Heart right ventricle (tissue), 16 donors: ENCODE measurements at regions of chrX and their contacts with region 1.

Region 1: GRCh38 chrX:38166478-38167083 is 54.1 kb downstream of the SRPX start:
- DNase-seq: no peak
- ATAC-seq: no peak
- H3K4me3 ChIP-seq: no peak overlapping the region
- H3K27ac ChIP-seq: no peak overlapping the region
- H3K4me1 ChIP-seq: no peaks in the 10 kb centered on the region
- H3K27me3 ChIP-seq: peaks cover 0 to 12% (median 0%) of the 10 kb centered on the region in 7 donors
- CTCF ChIP-seq: peak; percentile 22 to 64 (median 56)

Region 2: DNA sequence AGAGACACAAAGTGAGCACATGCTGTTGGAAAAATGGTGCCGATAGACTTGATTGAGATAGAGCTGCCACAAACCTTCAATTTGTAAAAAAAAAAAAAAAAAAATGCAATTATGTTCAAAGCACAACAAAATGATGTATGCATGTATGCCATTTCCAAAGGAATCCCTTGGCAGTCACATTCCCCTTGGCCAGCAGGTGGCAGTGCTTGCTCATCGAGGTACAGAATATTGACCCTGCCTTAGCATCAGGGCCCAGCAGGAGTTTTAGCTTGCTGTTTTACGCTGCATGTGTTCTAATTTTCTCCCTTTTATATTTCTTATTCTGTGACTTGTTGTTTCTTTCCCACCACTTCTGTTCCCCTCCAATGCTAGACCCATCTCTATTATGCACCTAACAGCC is 421.2 kb before region 1 on chrX:
- intact Hi-C with region 1: loop called in 3 of 10 experiments (anchors 5 to 10 kb)
- DNase-seq: peak; percentile 53 to 59
- ATAC-seq: peak in 7 of 8 donors; percentile 38 to 78 (median 57)
- H3K4me3 ChIP-seq: no peak overlapping the region
- H3K27ac ChIP-seq: peak overlapping the region in 1 of 10 donors; percentile 35
- H3K4me1 ChIP-seq: peaks cover 0 to 16% (median 0%) of the 10 kb centered on the region in 9 donors
- H3K27me3 ChIP-seq: peaks cover 0 to 11% (median 0%) of the 10 kb centered on the region in 7 donors
- CTCF ChIP-seq: peak; percentile 30 to 82 (median 68)